Common myeloid progenitor, CD34-positive (primary cell): ENCODE measurements at regions of chr9 and their contacts with region 1.

Region 1: GRCh38 chr9:4762108-4762885 is 21.3 kb upstream of the AK3 start:
- DNase-seq: peak; percentile 84 to 91 (median 91)
- H3K4me3 ChIP-seq: peak overlapping the region in 6 of 7 experiments; percentile 53 to 84 (median 65)
- H3K27ac ChIP-seq: peak overlapping the region in 1 of 2 experiments; percentile 52
- H3K4me1 ChIP-seq: peaks cover 3 to 23% (median 15%) of the 10 kb centered on the region in 4 experiments
- H3K27me3 ChIP-seq: peaks cover 0 to 3% (median 0%) of the 10 kb centered on the region in 5 experiments

Region 2: GRCh38 chr9:4740638-4741364 is 21.5 kb before region 1 on chr9 and contains the start of gene AK3:
- CTCF ChIA-PET with region 1: interaction called, 46 read pairs
- POLR2A ChIA-PET with region 1: no interaction called
- DNase-seq: peak; percentile 90 to 95 (median 95)
- H3K4me3 ChIP-seq: peak within 1 kb of the TSS; percentile 54 to 89 (median 80)
- H3K27ac ChIP-seq: peak within 1 kb of the TSS; percentile 46 to 86
- H3K4me1 ChIP-seq: peaks cover 5 to 26% (median 18%) of the 10 kb centered on the region in 4 experiments
- H3K27me3 ChIP-seq: no peaks in the 10 kb centered on the region

Region 3: DNA sequence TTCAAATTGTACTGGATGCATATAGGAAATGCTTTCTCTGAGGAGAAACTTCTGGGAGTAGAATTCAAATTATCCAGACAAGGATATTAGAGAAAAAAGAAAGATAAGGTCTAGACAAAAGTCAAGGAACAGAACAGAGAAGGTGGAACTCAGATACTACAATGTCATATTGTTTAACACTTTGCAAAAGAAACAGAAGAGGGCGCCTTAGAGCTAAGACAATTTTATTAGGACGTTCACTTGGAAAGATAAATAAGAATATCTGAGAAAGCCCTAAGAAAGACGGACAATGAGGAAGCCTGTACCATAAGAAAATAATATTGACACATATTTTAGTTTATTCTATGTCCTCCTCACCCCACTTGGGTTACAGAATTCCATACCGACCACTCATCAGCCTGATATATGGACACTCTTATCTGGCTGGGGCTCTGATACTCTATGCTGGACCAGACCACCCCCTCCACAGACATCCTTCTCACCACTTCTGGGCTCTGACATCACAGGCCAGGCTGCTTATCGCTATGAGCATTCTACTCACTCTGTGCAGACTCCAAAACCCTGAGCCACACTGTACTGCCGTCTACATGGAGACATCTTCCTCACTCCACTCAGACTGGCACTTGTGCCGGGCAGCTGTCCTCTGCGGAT is 12.1 kb before region 1 on chr9:
- CTCF ChIA-PET with region 1: interaction called, 46 read pairs
- POLR2A ChIA-PET with region 1: no interaction called
- DNase-seq: peak; percentile 41 to 74 (median 61)
- H3K4me3 ChIP-seq: no peak overlapping the region
- H3K27ac ChIP-seq: no peak overlapping the region
- H3K4me1 ChIP-seq: no peaks in the 10 kb centered on the region
- H3K27me3 ChIP-seq: no peaks in the 10 kb centered on the region

Region 4: DNA sequence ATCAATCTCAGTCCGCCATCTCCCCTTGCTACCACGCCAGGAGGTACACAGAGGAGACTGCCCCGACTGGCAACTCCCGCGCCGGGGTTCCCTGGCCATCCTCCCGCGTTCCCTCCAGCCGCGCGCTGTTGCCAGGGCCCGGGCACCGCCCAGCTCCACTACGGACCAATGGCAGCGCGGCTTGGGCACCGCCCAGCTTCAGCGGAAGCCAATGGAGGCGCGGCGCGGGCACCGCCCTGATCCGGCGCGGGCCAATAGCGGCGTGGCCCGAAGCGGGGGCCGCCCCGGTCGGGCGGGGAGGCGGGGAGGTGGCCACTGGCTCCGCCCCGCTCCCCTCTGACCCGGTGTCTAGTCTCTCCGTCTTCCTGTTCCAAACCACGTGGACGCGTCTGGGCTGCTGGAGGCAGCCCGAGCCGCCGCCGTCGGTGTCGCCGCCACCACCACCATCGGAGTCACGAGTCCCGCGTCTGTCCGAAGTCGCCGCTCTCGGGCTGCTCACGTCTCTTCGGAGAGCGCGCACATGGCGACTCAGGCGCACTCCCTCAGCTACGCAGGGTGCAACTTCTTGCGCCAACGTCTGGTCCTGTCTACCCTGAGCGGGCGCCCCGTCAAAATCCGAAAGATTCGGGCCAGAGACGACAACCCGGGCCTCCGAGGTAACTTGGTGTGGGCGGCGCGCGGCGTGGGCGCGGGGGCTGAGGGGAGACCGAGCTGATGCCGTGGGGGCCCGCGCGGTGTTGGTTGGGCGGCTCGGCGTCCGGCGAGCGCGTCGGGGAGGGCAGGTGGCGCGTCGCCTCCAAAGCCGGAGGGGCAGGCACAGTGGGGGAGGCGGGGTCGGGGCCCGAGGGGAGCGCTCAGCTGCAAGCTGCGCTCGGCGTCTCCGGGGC is 30.5 kb after region 1 on chr9 and contains the start of gene RCL1:
- CTCF ChIA-PET with region 1: interaction called, 19 read pairs
- POLR2A ChIA-PET with region 1: no interaction called
- DNase-seq: peak; percentile 95 to 98 (median 98)
- H3K4me3 ChIP-seq: peak within 1 kb of the TSS; percentile 79 to 99 (median 91)
- H3K27ac ChIP-seq: peak within 1 kb of the TSS; percentile 33 to 76
- H3K4me1 ChIP-seq: peaks cover 17 to 26% (median 24%) of the 10 kb centered on the region in 4 experiments
- H3K27me3 ChIP-seq: no peaks in the 10 kb centered on the region

Region 5: DNA sequence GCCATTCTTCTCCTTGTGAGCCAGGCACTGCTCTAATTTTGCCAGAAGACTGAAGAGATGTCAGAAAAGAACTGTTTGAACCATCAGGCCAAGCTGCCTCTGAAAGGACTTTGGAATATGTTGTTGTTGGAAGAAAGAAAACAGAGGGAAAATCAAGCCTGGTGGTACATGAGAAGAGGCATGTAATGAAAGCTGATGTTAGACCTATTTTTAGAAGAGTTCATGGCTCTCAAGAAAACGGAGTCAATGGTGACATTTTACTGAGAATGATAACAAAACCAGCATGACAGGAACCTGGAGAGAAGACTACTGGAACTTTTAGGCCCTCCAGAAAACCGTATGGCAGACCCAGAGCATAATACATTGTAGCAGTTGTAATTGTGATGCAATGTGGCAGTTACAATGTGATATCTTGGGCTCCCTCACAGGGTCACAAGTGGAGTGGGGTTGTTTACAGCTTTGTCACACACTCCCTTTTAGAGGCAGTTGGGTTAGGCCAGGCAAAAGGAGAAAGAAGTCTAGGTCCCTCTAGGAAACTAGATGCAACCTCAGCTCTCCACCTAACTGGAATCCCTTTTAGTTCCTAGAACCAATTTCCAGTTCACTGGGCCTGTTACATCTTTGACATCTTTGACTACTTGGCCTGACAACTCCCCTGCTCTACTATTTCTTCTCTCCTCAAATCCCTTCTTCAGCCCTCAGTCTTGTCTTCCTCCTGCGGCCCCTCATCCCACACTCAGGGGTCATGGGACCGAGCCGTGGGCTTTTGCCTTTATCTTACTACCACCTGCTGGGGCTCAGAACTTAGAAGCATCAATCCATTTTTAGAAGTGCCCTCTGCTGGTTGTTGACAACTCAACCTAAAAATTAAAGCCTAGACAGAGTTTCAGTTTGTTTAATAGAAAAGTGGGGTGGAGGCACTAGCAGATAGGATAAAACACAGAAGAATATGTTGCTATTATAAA is 161.6 kb after region 1 on chr9:
- CTCF ChIA-PET with region 1: interaction called, 40 read pairs
- POLR2A ChIA-PET with region 1: no interaction called
- DNase-seq: peak; percentile 62 to 76 (median 75)
- H3K4me3 ChIP-seq: no peak overlapping the region
- H3K27ac ChIP-seq: no peak overlapping the region
- H3K4me1 ChIP-seq: no peaks in the 10 kb centered on the region
- H3K27me3 ChIP-seq: no peaks in the 10 kb centered on the region

Region 6: GRCh38 chr9:4984621-4985385 is 222.5 kb after region 1 on chr9 and contains the start of gene JAK2:
- CTCF ChIA-PET with region 1: interaction called, 29 read pairs
- POLR2A ChIA-PET with region 1: interaction called, 4 read pairs
- DNase-seq: peak; percentile 93 to 96 (median 94)
- H3K4me3 ChIP-seq: peak within 1 kb of the TSS; percentile 80 to 92 (median 86)
- H3K27ac ChIP-seq: peak within 1 kb of the TSS; percentile 82 to 93
- H3K4me1 ChIP-seq: peaks cover 31 to 47% (median 40%) of the 10 kb centered on the region in 4 experiments
- H3K27me3 ChIP-seq: no peaks in the 10 kb centered on the region